Activated naive CD4-positive, alpha-beta T cell treated with anti-CD3 and anti-CD28 coated beads, Interleukin-2, amount 10 ng/mL, durations not matched to agents 7 days and 5 days (primary cell): ENCODE measurements at regions of chr17 and their contacts with region 1.

Region 1: DNA sequence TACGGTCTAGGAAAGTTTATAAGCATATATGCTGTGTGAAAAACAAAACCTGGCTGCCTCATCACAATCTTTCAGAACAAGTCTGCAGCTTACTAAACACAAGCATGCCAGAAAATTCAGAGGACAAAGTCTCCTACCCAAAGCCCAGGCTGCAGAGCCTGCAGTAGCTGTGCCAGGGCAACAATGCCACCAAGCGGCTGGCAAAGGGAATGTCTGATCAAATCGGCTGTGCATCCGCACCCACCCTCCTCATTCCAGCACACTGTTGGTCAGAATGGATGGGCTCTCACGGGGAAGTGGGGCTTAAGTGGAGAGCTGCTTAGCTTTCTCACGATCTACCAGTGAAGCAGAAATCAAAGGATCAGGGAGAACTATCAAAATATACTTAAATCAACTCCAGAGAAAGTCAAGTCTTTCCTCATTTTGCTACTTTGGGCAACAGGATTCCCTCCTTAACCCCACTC is 73.5 kb downstream of the CYTH1 start:
- DNase-seq: peak; percentile 70
- H3K4me3 Mint-ChIP-seq: peak overlapping the region; percentile 47
- H3K27ac Mint-ChIP-seq: peak overlapping the region; percentile 89
- H3K4me1 Mint-ChIP-seq: peaks cover 58% of the 10 kb centered on the region
- H3K27me3 Mint-ChIP-seq: no peaks in the 10 kb centered on the region

Region 2: DNA sequence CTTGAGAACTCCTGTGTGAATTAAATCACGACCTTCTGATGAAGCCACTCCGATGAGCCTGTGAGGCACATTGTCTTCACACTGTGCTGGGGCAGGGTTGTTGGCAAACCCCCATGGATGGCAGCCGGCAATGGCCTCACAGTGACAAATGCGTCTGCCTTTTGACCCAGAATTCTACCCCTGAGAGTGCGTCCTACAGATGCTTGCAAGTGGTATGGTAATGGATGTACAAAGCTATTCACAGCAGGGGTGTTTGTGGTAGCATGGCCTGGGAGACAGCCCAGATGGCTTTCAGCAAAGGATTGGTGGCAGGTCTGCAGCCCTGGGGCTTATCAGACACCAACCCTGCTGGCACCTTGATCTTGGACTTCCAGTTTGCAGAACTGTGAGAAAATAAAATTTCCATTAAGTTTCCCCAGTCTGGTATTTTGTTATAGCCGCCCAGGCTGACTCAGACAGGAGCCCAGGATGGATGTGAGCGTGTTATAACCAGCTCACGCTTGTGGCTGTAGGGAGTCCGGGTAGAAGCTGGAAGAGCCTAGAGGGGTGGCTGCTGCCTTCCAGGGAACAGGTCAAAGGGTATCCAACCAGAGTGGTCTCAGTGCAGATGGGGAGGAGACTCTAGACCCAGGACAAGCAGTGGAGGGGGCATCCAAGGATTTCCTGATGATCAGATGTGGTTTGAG is 511.3 kb before region 1 on chr17:
- CTCF ChIA-PET with region 1: no interaction called
- DNase-seq: no peak
- H3K4me3 Mint-ChIP-seq: no peak overlapping the region
- H3K27ac Mint-ChIP-seq: no peak overlapping the region
- H3K4me1 Mint-ChIP-seq: peaks cover 6% of the 10 kb centered on the region
- H3K27me3 Mint-ChIP-seq: no peaks in the 10 kb centered on the region

Region 3: DNA sequence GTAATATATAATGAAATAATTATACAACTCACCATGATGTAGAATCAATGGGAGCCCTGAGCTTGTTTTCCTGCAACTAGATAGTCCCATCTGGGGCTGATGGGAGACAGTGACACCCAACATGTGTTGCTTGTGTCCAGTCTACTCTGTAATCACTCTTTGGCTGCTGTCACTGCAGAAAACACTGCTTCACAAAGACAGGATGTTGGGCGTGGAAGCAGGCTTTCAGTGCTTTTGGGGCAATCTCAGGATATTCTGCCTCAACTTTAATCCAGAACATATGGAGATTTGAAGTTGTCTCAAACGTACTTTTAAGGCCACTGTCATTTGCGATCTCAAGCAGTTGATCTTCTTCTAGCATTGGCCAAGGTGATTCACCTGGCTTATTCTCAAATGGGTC is 21.4 kb before region 1 on chr17:
- CTCF ChIA-PET with region 1: no interaction called
- DNase-seq: no peak
- H3K4me3 Mint-ChIP-seq: no peak overlapping the region
- H3K27ac Mint-ChIP-seq: peak overlapping the region; percentile 33
- H3K4me1 Mint-ChIP-seq: peaks cover 6% of the 10 kb centered on the region
- H3K27me3 Mint-ChIP-seq: no peaks in the 10 kb centered on the region

Region 4: GRCh38 chr17:78736526-78737079 is 28.1 kb after region 1 on chr17:
- CTCF ChIA-PET with region 1: interaction called, 24 read pairs
- DNase-seq: peak; percentile 84
- H3K4me3 Mint-ChIP-seq: peak overlapping the region; percentile 88
- H3K27ac Mint-ChIP-seq: peak overlapping the region; percentile 94
- H3K4me1 Mint-ChIP-seq: peaks cover 93% of the 10 kb centered on the region
- H3K27me3 Mint-ChIP-seq: no peaks in the 10 kb centered on the region